ENCODE measurements at regions of chr18 and their contacts with region 1.

Region 1: DNA sequence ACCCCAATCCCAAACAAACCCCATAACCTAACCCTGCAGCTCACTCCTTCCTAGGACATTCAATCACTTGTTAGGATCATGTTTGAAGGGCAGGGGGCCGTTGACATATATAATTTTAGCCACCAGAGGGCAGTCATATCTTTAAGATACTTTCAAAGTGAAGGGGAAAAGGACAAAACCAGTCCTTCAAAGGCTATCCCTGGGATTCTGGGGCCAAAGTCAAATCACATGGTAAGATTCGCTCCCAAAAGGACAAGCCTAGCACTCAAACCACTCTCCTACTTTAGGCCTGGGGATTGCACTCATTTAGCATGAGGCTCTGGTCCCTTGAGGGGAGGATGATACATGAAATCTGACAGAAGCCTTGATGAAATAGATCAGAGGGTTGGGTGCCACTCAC is 44.6 kb downstream of the HAUS1 start:
- DNase-seq: peak; percentile 66
- ATAC-seq: peak; percentile 67
- H3K4me3 Mint-ChIP-seq: no peak overlapping the region
- H3K27ac Mint-ChIP-seq: 0 out of 2 replicates have a peak overlapping the region, but pooled peaks have one; percentile 20
- H3K4me1 Mint-ChIP-seq: peaks cover 29% of the 10 kb centered on the region
- H3K27me3 Mint-ChIP-seq: no peaks in the 10 kb centered on the region
- CTCF ChIP-seq: peak; percentile 68

Region 2: GRCh38 chr18:46166261-46166970 is 17.6 kb after region 1 on chr18:
- CTCF ChIA-PET with region 1: interaction called, 27 read pairs
- POLR2A ChIA-PET with region 1: interaction called, 3 read pairs
- DNase-seq: peak; percentile 24
- ATAC-seq: peak; percentile 93
- H3K4me3 Mint-ChIP-seq: no peak overlapping the region
- H3K27ac Mint-ChIP-seq: peak overlapping the region; percentile 84
- H3K4me1 Mint-ChIP-seq: peaks cover 28% of the 10 kb centered on the region
- H3K27me3 Mint-ChIP-seq: no peaks in the 10 kb centered on the region; the same call in 1 of the 2 replicates
- CTCF ChIP-seq: no peak

Measured in WTC11 (cell line).